ENCODE measurements at regions of chr6 and their contacts with region 1.

Region 1: DNA sequence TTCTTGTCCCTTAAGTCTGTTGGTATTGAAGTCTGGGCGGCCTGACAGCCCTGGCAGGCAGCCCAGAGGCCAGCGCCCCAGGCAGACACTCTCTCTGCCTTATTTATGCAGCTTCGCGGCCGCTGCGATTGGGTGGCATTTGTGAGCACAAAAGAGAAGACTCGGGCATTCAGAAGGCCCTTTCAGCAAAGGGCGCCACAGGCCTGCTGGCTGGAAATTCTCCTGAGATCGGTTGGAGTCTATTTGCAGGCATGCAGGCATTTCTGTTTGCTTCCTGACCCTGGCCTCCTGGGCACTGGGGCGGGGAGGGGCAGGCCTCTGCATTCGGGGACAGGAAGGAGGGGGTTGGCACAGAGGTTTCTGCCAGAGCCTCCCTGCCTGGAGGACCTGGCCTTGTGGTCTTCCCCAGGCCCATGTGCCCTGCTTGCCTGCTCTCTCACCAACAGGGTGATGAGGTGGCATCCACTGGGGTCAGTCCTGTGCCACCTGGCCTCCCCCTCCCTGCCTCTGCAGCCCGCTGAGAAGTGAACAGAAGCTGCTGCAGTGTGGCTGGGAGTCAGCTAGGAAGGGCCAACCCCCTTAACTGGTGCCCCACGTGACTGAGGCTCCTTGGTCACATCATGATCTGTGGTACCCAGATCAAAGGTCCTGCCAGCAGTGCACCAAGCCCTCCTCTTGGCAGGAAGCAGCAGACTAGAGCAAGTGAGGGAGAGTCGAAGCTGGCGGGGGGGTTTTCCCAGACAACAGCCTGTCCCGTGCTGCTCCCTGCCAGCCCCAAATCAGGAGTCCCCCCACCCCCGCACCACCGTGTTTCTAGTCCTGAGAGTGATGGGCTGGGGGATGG is 16.6 kb upstream of the CCDC167 start:
- DNase-seq: peak; percentile 97
- ATAC-seq: peak; percentile 78
- H3K4me3 Mint-ChIP-seq: peak overlapping the region; percentile 78
- H3K27ac Mint-ChIP-seq: peak overlapping the region; percentile 97
- H3K4me1 Mint-ChIP-seq: peaks cover 82% of the 10 kb centered on the region
- H3K27me3 Mint-ChIP-seq: no peaks in the 10 kb centered on the region
- CTCF ChIP-seq: no peak

Region 2: DNA sequence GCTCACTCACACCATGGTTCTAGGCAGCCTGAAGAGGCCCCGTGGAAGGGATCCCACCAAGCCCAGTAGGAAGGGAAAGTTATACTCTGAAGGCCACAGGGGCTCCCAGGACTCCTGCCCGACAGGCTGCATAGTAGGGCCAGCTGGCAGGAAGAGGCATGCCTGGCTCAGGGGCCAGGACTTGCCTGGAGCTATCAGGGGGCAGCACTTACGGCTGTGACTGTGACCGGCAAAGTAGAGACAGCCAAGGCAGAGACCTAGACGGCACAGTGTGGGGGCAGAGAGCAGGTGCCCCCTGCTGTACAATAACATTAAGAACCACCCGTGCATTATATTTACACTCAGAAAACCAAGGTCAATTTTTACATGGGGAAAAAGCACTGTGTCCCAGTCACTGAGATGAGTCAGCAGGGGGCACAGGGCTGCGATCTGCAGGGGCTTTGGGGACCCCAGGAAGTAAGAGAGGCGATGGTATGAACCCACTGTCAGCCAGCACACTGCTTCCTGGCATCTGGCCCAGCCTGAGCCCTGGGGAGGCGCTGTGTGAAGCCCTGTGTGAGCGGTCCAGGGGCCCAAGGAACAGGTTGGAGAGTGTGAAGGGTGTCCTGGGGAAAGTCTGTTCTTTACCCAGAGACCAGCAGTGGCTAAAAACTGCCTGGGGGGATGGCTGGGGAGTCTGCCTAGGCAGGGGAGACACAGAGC is 26.5 kb before region 1 on chr6:
- CTCF ChIA-PET with region 1: interaction called, 33 read pairs
- POLR2A ChIA-PET with region 1: interaction called, 40 read pairs
- intact Hi-C with region 1: no loop called
- DNase-seq: peak; percentile 55
- ATAC-seq: peak; percentile 69
- H3K4me3 Mint-ChIP-seq: peak overlapping the region; percentile 17
- H3K27ac Mint-ChIP-seq: peak overlapping the region; percentile 90
- H3K4me1 Mint-ChIP-seq: peaks cover 68% of the 10 kb centered on the region
- H3K27me3 Mint-ChIP-seq: no peaks in the 10 kb centered on the region
- CTCF ChIP-seq: peak; percentile 51

Region 3: DNA sequence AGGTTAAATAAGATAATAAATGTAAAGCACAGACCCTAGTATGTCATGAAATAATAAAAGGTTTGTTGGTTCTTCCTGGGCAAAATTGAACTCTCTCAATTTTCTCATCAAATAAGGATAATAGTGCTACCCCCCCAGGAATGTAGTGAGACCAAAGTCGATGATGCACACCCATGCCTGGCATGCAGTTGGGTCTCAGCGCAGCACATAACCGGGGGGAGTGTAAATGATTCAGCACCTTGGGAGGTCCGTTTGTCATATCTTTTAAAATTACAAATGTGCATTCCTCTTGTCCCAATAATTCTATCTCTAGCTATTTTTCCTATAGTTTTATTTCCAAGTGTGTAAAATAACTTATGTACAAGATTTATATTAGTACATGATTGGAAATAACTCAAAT is 14.7 kb after region 1 on chr6:
- CTCF ChIA-PET with region 1: interaction called, 5 read pairs
- POLR2A ChIA-PET with region 1: interaction called, 10 read pairs
- intact Hi-C with region 1: no loop called
- DNase-seq: no peak
- ATAC-seq: no peak
- H3K4me3 Mint-ChIP-seq: no peak overlapping the region
- H3K27ac Mint-ChIP-seq: no peak overlapping the region
- H3K4me1 Mint-ChIP-seq: peaks cover 26% of the 10 kb centered on the region
- H3K27me3 Mint-ChIP-seq: no peaks in the 10 kb centered on the region
- CTCF ChIP-seq: no peak

Region 4: GRCh38 chr6:37547564-37548061 is 31.3 kb after region 1 on chr6:
- CTCF ChIA-PET with region 1: no interaction called
- POLR2A ChIA-PET with region 1: interaction called, 9 read pairs
- intact Hi-C with region 1: loop called (anchors 5 kb)
- DNase-seq: no peak
- ATAC-seq: peak; percentile 53
- H3K4me3 Mint-ChIP-seq: no peak overlapping the region
- H3K27ac Mint-ChIP-seq: no peak overlapping the region
- H3K4me1 Mint-ChIP-seq: peaks cover 34% of the 10 kb centered on the region
- H3K27me3 Mint-ChIP-seq: no peaks in the 10 kb centered on the region
- CTCF ChIP-seq: no peak

Region 5: GRCh38 chr6:37566111-37566949 is 50.0 kb after region 1 on chr6:
- CTCF ChIA-PET with region 1: interaction called, 7 read pairs
- POLR2A ChIA-PET with region 1: interaction called, 10 read pairs
- intact Hi-C with region 1: no loop called
- DNase-seq: peak; percentile 77
- ATAC-seq: peak; percentile 99
- H3K4me3 Mint-ChIP-seq: peak overlapping the region; percentile 45
- H3K27ac Mint-ChIP-seq: no peak overlapping the region
- H3K4me1 Mint-ChIP-seq: peaks cover 3% of the 10 kb centered on the region
- H3K27me3 Mint-ChIP-seq: peaks cover 2% of the 10 kb centered on the region
- CTCF ChIP-seq: peak; percentile 95

Region 6: DNA sequence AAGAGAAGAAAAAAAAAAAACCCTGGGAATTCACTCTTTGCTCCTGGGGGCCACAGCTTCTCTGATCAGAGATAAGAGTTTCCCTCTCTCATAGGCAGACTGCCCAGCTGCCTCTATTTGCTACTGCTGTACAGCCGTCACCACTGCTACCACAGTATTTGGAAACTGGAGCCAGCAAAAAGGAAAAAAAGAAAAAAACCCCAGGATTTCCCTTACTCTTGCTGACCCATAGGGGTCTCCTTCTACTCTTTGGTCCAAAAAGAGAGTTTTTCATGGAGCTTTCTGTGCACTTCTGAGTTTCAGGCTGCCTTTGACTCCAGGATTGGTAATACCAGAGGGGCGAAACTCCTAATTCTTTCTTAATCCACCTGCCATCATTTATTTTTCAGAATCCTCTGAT is 91.6 kb after region 1 on chr6:
- CTCF ChIA-PET with region 1: no interaction called
- POLR2A ChIA-PET with region 1: no interaction called
- intact Hi-C with region 1: no loop called
- DNase-seq: no peak
- ATAC-seq: no peak
- H3K4me3 Mint-ChIP-seq: no peak overlapping the region
- H3K27ac Mint-ChIP-seq: no peak overlapping the region
- H3K4me1 Mint-ChIP-seq: no peaks in the 10 kb centered on the region
- H3K27me3 Mint-ChIP-seq: peaks cover 2% of the 10 kb centered on the region
- CTCF ChIP-seq: no peak

Region 7: DNA sequence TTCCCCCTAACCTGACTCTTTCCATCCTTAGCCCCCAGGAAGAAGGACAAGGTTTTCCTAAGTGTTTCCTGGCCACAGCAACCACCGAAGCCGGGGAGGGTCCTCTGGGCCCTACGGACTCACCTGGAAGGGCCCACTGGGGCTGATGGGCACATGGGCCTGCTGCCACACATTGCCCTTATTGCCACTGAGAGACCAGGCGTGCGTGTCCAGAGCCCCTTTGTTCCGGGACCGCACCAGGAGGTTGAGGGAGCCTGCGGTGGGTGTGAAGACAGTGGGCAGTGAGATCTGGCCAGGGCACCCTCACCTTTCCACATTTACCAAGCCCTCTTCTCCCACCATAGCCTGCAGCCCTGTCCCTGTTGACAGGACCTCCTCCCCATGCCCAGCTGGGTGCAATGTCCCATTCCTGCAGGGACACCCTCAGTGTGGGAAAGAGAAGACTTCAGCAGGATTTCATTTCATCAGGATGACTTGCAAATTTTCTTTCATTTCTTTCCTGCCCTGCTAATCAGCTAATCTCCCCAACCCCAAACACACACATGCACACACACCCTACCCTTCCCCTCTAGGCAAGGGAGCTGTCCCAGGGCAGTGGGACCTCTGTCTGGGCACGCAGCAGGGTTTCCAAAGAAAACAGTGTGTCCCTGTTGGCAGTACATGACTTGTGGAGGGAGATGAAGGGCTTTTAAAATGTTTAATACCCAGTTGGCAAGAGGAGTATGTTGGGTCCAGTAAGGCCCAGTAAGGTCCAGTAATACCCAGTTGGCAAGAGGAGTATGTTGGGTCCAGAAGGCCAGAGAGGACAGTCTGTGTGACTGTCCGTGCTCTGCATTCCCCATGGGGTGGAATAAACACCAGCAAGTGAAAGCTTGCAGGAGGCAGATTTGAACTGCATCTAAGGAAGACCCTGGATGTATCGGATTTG is 122.4 kb after region 1 on chr6:
- CTCF ChIA-PET with region 1: no interaction called
- POLR2A ChIA-PET with region 1: no interaction called
- intact Hi-C with region 1: no loop called
- DNase-seq: no peak
- ATAC-seq: no peak
- H3K4me3 Mint-ChIP-seq: no peak overlapping the region
- H3K27ac Mint-ChIP-seq: no peak overlapping the region
- H3K4me1 Mint-ChIP-seq: peaks cover 2% of the 10 kb centered on the region
- H3K27me3 Mint-ChIP-seq: no peaks in the 10 kb centered on the region
- CTCF ChIP-seq: no peak

Measured in activated CD8-positive, alpha-beta T cell treated with anti-CD3 and anti-CD28 coated beads for 36 hours (primary cell).